Endothelial cell of umbilical vein (primary cell): ENCODE measurements at regions of chr12 and their contacts with region 1.

Region 1: GRCh38 chr12:14365294-14366208 is at the start of gene ATF7IP:
- DNase-seq: peak; percentile 97
- H3K4me3 ChIP-seq: peak within 1 kb of the TSS; percentile 53 to 98 (median 98)
- H3K27ac ChIP-seq: peak within 1 kb of the TSS; percentile 89
- H3K4me1 ChIP-seq: peaks cover 17% of the 10 kb centered on the region
- H3K27me3 ChIP-seq: no peaks in the 10 kb centered on the region
- CTCF ChIP-seq: no peak
- POLR2A ChIP-seq: peak; percentile 81
- total RNA-seq, gene ATF7IP: 72.4 and 73.5 TPM in 2 replicates

Region 2: GRCh38 chr12:14322403-14322802 is 43.1 kb before region 1 on chr12:
- CTCF ChIA-PET with region 1: no interaction called
- POLR2A ChIA-PET with region 1: no interaction called
- dilution Hi-C with region 1: no loop called
- intact Hi-C with region 1: no loop called
- DNase-seq: no peak
- H3K4me3 ChIP-seq: no peak overlapping the region
- H3K27ac ChIP-seq: no peak overlapping the region
- H3K4me1 ChIP-seq: no peaks in the 10 kb centered on the region
- H3K27me3 ChIP-seq: no peaks in the 10 kb centered on the region
- CTCF ChIP-seq: no peak
- POLR2A ChIP-seq: no peak

Region 3: GRCh38 chr12:14384783-14385638 is 19.5 kb after region 1 on chr12:
- CTCF ChIA-PET with region 1: interaction called, 12 read pairs
- POLR2A ChIA-PET with region 1: interaction called, 10 read pairs
- dilution Hi-C with region 1: no loop called
- intact Hi-C with region 1: loop called (anchors 1 kb)
- DNase-seq: peak; percentile 94
- H3K4me3 ChIP-seq: peak overlapping the region in 1 of 3 experiments; percentile 16
- H3K27ac ChIP-seq: peak overlapping the region; percentile 58
- H3K4me1 ChIP-seq: peaks cover 20% of the 10 kb centered on the region
- H3K27me3 ChIP-seq: no peaks in the 10 kb centered on the region
- CTCF ChIP-seq: no peak
- POLR2A ChIP-seq: no peak

Region 4: GRCh38 chr12:14403711-14404196 is 38.2 kb after region 1 on chr12:
- CTCF ChIA-PET with region 1: interaction called, 9 read pairs
- POLR2A ChIA-PET with region 1: no interaction called
- dilution Hi-C with region 1: no loop called
- intact Hi-C with region 1: loop called (anchors 5 kb)
- DNase-seq: peak; percentile 77
- H3K4me3 ChIP-seq: no peak overlapping the region
- H3K27ac ChIP-seq: no peak overlapping the region
- H3K4me1 ChIP-seq: peaks cover 16% of the 10 kb centered on the region
- H3K27me3 ChIP-seq: no peaks in the 10 kb centered on the region
- CTCF ChIP-seq: no peak
- POLR2A ChIP-seq: no peak

Region 5: DNA sequence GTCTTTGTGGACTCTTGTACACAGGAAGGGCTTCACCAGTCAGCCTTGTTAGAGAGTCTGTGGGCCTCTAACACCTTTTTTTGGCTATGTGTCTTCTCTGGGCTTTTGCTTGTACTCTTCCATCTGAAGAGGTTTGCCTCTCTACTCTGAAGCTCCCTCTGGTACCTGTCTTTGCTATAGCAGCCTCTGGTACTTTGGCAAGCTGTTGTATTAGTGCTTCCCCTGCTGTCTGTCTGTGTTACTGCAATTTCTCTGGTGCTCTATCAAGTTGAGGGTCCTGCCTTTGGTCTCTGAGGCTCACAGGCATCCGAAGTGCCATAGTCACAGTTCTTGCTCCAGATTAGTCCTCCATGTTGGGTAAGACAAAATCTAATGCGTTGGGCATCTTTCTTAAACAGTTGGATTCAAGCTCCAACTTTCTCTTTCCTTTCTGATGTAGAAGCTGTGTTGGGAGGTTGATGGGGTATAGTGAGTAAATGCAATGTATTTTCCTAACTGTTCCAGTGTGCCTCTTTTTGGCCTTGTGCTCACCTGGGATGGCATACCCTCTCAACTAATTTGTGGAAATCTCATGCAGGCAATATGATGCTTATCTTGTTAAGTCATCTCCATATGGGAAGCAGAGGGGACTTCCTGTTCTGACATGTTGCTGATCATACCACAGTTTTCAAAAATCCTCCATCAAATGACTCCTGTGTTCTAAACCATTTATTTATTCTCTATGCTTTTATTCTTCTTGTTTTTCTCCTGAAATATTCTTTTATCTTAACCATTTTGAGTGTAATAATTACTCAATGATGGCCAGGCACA is 88.8 kb after region 1 on chr12:
- CTCF ChIA-PET with region 1: interaction called, 13 read pairs
- POLR2A ChIA-PET with region 1: interaction called, 4 read pairs
- dilution Hi-C with region 1: no loop called
- intact Hi-C with region 1: no loop called
- DNase-seq: peak; percentile 33
- H3K4me3 ChIP-seq: no peak overlapping the region
- H3K27ac ChIP-seq: no peak overlapping the region
- H3K4me1 ChIP-seq: no peaks in the 10 kb centered on the region
- H3K27me3 ChIP-seq: no peaks in the 10 kb centered on the region
- CTCF ChIP-seq: peak; percentile 59 to 63
- POLR2A ChIP-seq: no peak

Region 6: DNA sequence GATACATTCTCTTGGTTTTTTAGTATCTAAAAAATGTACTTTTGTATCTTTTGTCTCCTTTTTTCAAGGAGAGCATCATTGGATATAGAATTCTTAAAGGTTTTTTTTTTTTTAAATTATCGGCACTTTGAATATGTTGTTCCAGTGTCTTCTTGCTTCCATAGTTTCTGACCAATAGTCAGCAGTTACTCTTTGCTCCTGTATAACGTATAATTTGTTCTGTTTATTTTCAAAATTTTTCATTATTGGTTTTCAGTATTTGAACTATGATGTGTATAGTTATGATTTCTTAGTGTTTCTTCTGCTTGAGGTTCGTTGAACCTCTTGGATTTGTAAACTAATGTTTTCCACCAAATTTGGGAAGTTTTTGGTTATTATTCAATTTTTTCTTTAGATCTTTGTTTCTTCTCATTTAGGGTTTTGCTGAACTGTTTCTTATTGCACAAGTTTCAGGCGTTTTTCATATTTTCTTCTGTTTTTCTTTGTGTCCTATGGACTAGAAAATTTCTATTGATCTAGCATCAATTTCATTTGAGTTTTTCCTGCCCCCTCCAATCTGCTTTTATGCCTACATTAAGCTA is 108.2 kb after region 1 on chr12:
- CTCF ChIA-PET with region 1: no interaction called
- POLR2A ChIA-PET with region 1: no interaction called
- dilution Hi-C with region 1: no loop called
- intact Hi-C with region 1: no loop called
- DNase-seq: no peak
- H3K4me3 ChIP-seq: no peak overlapping the region
- H3K27ac ChIP-seq: no peak overlapping the region
- H3K4me1 ChIP-seq: no peaks in the 10 kb centered on the region
- H3K27me3 ChIP-seq: no peaks in the 10 kb centered on the region
- CTCF ChIP-seq: no peak
- POLR2A ChIP-seq: no peak